CD8-positive, alpha-beta memory T cell (primary cell): ENCODE measurements at regions of chr2 and their contacts with region 1.

Region 1: GRCh38 chr2:10072656-10073480 is 7.3 kb downstream of the CYS1 start:
- DNase-seq: peak; percentile 62 to 83 (median 72)
- H3K4me3 ChIP-seq: no peak overlapping the region
- H3K4me3 Mint-ChIP-seq: no peak overlapping the region
- H3K27ac ChIP-seq: no peak overlapping the region
- H3K27ac Mint-ChIP-seq: no peak overlapping the region
- H3K4me1 ChIP-seq: no peaks in the 10 kb centered on the region
- H3K4me1 Mint-ChIP-seq: peaks cover 3 to 6% (median 5%) of the 10 kb centered on the region in 3 donors
- H3K27me3 ChIP-seq: peaks cover 14% of the 10 kb centered on the region
- H3K27me3 Mint-ChIP-seq: peaks cover 21 to 53% of the 10 kb centered on the region in 2 donors

Region 2: GRCh38 chr2:10057231-10058107 is 15.4 kb before region 1 on chr2:
- CTCF ChIA-PET with region 1: interaction called, 15 read pairs
- POLR2A ChIA-PET with region 1: no interaction called
- DNase-seq: no peak
- H3K4me3 ChIP-seq: no peak overlapping the region
- H3K4me3 Mint-ChIP-seq: no peak overlapping the region
- H3K27ac ChIP-seq: no peak overlapping the region
- H3K27ac Mint-ChIP-seq: no peak overlapping the region
- H3K4me1 ChIP-seq: no peaks in the 10 kb centered on the region
- H3K4me1 Mint-ChIP-seq: peaks cover 0 to 6% (median 0%) of the 10 kb centered on the region in 3 donors
- H3K27me3 ChIP-seq: no peaks in the 10 kb centered on the region
- H3K27me3 Mint-ChIP-seq: no peaks in the 10 kb centered on the region

Region 3: GRCh38 chr2:10097352-10098148 is 24.7 kb after region 1 on chr2:
- CTCF ChIA-PET with region 1: interaction called, 38 read pairs
- POLR2A ChIA-PET with region 1: no interaction called
- DNase-seq: peak in 1 of 5 donors; percentile 19
- H3K4me3 ChIP-seq: no peak overlapping the region
- H3K4me3 Mint-ChIP-seq: peak overlapping the region in 1 of 7 donors; percentile 49
- H3K27ac ChIP-seq: no peak overlapping the region
- H3K27ac Mint-ChIP-seq: peak overlapping the region in 1 of 8 donors; percentile 17
- H3K4me1 ChIP-seq: no peaks in the 10 kb centered on the region
- H3K4me1 Mint-ChIP-seq: no peaks in the 10 kb centered on the region
- H3K27me3 ChIP-seq: peaks cover 14% of the 10 kb centered on the region
- H3K27me3 Mint-ChIP-seq: peaks cover 22 to 47% of the 10 kb centered on the region in 2 donors

Region 4: DNA sequence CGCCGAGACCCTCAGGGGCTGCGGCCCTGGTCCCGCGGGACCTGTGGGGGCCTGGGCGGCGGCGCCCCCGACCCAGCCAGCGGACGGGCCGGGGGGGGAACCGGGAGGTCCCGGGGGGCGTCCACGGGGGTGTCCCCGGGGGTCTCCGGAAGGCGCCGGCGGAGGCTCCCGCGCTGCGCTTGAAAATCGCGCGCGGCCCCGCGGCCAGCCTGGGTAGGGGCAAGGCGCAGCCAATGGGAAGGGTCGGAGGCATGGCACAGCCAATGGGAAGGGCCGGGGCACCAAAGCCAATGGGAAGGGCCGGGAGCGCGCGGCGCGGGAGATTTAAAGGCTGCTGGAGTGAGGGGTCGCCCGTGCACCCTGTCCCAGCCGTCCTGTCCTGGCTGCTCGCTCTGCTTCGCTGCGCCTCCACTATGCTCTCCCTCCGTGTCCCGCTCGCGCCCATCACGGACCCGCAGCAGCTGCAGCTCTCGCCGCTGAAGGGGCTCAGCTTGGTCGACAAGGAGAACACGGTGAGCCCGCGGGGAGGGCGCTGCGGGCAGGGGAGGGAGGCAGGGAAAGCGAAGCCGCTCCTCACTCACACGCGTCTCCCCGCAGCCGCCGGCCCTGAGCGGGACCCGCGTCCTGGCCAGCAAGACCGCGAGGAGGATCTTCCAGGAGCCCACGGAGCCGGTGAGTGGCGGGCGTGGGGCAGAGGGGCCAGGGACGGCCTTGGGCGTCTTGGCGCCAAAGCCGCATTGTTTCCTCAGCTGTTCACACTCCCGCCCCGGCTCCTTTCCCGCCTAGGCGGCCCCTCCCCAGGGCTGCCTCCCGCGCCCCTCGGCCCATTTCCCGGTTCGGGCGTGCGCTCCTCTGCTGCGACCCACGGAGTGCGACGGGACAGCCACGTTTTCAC is 49.8 kb after region 1 on chr2 and contains the start of gene RRM2:
- CTCF ChIA-PET with region 1: interaction called, 16 read pairs
- POLR2A ChIA-PET with region 1: interaction called, 5 read pairs
- DNase-seq: peak; percentile 81 to 91 (median 82)
- H3K4me3 ChIP-seq: peak within 1 kb of the TSS; percentile 53
- H3K4me3 Mint-ChIP-seq: peak within 1 kb of the TSS; percentile 85 to 98 (median 98)
- H3K27ac ChIP-seq: peak within 1 kb of the TSS; percentile 78
- H3K27ac Mint-ChIP-seq: peak within 1 kb of the TSS in 7 of 8 donors; percentile 51 to 81 (median 68)
- H3K4me1 ChIP-seq: peaks cover 36% of the 10 kb centered on the region
- H3K4me1 Mint-ChIP-seq: peaks cover 41 to 59% (median 57%) of the 10 kb centered on the region in 3 donors
- H3K27me3 ChIP-seq: peaks cover 7% of the 10 kb centered on the region
- H3K27me3 Mint-ChIP-seq: peaks cover 15 to 17% of the 10 kb centered on the region in 2 donors
- total RNA-seq, gene RRM2: 425 to 427 TPM

Region 5: GRCh38 chr2:10360851-10361588 is 288.2 kb after region 1 on chr2:
- CTCF ChIA-PET with region 1: no interaction called
- POLR2A ChIA-PET with region 1: no interaction called
- DNase-seq: no peak
- H3K4me3 ChIP-seq: no peak overlapping the region
- H3K4me3 Mint-ChIP-seq: peak overlapping the region in 2 of 7 donors; percentile 33 to 84
- H3K27ac ChIP-seq: no peak overlapping the region
- H3K27ac Mint-ChIP-seq: peak overlapping the region in 3 of 8 donors; percentile 21 to 89 (median 55)
- H3K4me1 ChIP-seq: peaks cover 9% of the 10 kb centered on the region
- H3K4me1 Mint-ChIP-seq: peaks cover 21 to 75% (median 34%) of the 10 kb centered on the region in 3 donors
- H3K27me3 ChIP-seq: no peaks in the 10 kb centered on the region
- H3K27me3 Mint-ChIP-seq: peaks cover 0 to 2% of the 10 kb centered on the region in 2 donors